A673 (cell line): ENCODE measurements at regions of chr1 and their contacts with region 1.

Region 1: DNA sequence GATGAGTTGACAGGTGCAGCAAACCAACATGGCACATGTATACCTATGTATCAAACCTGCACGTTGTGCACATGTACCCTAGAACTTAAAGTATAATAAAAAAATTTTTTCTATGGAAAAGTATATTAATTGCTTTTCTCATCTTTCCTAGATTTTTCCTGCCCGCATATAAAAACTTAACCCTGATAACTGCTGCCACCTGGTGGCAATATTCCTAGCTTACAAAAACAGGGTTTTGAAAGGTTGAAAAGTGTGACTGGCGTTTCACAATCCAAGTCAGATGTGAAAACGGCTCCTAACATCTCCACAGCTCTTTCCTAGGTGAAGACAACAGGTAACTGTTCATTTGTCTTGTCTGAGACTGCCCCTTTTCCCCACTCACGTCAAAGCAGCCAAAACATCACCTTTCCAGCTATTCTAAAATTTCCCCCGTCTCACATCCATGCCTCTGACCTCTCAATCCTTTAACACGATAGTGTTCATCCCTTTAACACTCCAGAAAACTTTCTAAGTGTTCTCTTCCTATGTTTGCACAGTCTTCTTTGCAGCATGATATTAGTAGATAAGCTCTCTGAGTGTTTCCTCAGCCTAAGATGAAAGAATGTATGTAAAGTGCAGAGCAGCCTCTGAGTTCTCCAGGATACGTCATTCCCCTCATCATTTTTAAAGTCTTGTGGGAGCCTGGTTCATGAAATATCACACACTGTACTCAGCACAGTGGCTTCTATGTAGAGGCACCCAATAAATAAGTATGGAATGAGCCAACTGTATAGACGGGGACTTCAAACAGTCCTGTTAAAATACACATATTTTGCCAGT is 27.5 kb downstream of the OVGP1 start:
- DNase-seq: peak; percentile 58
- H3K4me3 ChIP-seq: no peak overlapping the region
- H3K27ac ChIP-seq: no peak overlapping the region
- H3K4me1 ChIP-seq: no peaks in the 10 kb centered on the region
- H3K27me3 ChIP-seq: peaks cover 37% of the 10 kb centered on the region
- CTCF ChIP-seq: peak; percentile 67

Region 2: GRCh38 chr1:111222308-111223125 is 177.5 kb before region 1 on chr1:
- CTCF ChIA-PET with region 1: interaction called, 21 read pairs
- POLR2A ChIA-PET with region 1: no interaction called
- intact Hi-C with region 1: loop called (anchors 1 kb)
- DNase-seq: peak; percentile 64
- H3K4me3 ChIP-seq: no peak overlapping the region
- H3K27ac ChIP-seq: no peak overlapping the region
- H3K4me1 ChIP-seq: no peaks in the 10 kb centered on the region
- H3K27me3 ChIP-seq: peaks cover 30% of the 10 kb centered on the region
- CTCF ChIP-seq: peak; percentile 93

Region 3: DNA sequence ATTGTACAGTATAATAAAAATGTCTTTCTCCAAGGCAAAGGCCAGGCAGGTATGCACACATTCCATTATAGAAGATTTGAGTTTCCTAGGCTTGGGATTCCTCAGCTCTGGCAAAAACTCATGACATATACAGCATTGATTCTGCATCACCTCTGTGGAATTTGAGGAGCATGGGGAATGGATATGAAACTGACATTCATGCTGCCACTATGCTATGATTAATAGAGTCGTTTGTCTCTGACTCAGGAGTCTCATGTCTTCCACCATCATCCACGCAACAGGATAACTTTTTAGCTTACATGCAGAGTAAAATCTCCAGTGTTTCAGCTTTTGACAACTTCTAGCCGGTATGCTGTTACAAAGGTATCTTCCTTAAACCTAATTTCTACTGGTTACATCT is 153.2 kb after region 1 on chr1:
- CTCF ChIA-PET with region 1: no interaction called
- POLR2A ChIA-PET with region 1: interaction called, 14 read pairs
- intact Hi-C with region 1: no loop called
- DNase-seq: no peak
- H3K4me3 ChIP-seq: no peak overlapping the region
- H3K27ac ChIP-seq: no peak overlapping the region
- H3K4me1 ChIP-seq: no peaks in the 10 kb centered on the region
- H3K27me3 ChIP-seq: peaks cover 12% of the 10 kb centered on the region
- CTCF ChIP-seq: no peak